ENCODE measurements at regions of chr9 and their contacts with region 1.

Region 1: DNA sequence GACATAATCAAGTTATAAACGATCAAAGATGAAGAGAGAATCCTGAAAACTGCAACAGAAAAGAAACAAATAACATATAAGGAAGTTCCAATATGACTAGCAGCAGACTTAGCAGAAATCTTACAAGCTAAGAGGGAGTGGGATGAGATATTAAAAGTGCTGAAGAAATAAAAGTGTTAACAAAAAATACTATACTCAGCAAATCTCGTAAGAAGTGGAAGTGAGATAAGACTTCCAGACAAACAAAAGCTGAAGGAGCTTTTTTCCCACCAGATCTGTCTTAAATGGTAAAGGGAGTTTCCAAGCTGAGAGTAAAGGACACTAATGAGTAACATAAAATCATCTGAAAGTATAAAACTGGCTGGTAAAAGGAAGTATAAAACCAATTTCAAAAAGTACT is 2036.0 kb upstream of the C9orf72 start:
- DNase-seq: no peak
- ATAC-seq: no peak

Region 2: GRCh38 chr9:30744871-30745270 is 1135.6 kb after region 1 on chr9:
- intact Hi-C with region 1: loop called (anchors 5 kb)
- DNase-seq: no peak
- ATAC-seq: no peak

Region 3: GRCh38 chr9:30815585-30815984 is 1206.3 kb after region 1 on chr9:
- intact Hi-C with region 1: no loop called
- DNase-seq: no peak
- ATAC-seq: no peak

Measured in sciatic nerve (tissue), 2 donors.